Colonic mucosa (tissue), 4 donors: ENCODE measurements at regions of chr15 and their contacts with region 1.

Region 1: DNA sequence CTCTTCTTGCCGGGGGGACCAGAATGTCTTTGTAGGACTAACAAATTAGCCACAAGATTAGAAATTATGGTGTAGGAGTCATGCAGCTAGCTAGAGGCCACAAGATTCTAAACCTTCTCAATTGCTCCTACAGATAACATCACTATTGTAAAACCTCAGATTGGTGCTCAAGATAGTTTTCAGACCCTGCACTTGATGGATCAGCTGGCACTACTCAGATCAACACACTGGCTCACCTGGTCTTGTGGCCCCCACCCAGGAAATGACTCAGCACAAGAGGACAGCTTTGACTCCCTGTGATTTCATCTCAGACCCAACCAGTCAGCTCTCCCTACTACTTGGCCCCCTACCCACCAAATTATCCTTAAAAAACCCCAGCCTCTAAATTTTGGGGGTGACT is 124.1 kb upstream of the RASGRP1 start:
- DNase-seq: no peak
- H3K4me3 ChIP-seq: no peak overlapping the region
- H3K27ac ChIP-seq: no peak overlapping the region
- H3K4me1 ChIP-seq: no peaks in the 10 kb centered on the region
- H3K27me3 ChIP-seq: no peaks in the 10 kb centered on the region
- CTCF ChIP-seq: no peak

Region 2: DNA sequence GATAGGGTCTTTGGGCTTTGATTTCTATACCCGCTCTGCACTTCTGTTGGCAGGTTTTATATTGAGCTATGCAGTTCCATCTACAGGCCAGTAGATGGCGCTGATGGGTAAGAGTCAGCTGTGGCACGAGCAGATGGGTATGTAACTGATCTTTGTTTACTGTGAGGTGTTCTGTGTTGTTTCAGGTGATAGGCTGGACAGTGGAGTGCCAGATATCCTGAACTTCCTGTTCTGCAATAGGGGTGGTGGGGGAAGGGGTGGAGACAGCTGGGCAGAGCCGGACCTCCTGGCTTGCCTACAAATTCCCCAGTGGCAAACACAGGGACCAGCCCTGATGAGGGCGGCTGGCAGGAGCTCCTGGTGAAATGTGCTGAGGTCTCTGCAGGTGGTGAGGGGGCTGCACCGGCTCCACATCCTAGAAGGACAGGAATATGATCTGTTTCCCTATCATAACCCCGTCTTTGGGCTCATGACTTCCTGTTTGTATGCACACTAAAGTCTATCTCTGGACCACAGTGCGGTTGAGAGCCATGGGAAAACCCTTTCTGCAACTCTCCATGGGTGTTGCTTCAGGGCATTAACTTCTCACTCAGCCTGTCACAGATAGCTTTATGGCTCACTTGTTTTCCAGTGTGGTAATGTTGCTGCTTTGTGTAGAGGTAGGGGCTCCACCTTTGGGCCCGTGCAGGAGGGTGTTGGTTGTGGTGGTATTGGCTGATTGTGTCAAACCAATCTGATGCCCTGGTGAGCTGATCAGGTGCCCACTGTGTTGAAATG is 248.2 kb before region 1 on chr15:
- intact Hi-C with region 1: loop called (anchors 5 kb)
- DNase-seq: peak; percentile 39
- H3K4me3 ChIP-seq: no peak overlapping the region
- H3K27ac ChIP-seq: no peak overlapping the region
- H3K4me1 ChIP-seq: no peaks in the 10 kb centered on the region
- H3K27me3 ChIP-seq: no peaks in the 10 kb centered on the region
- CTCF ChIP-seq: peak; percentile 85